Caco-2 (cell line): ENCODE measurements at regions of chr19 and their contacts with region 1.

Region 1: GRCh38 chr19:6424939-6425731 is 524 bp upstream of the KHSRP start:
- DNase-seq: peak; percentile 99 to 100
- H3K4me3 ChIP-seq: peak overlapping the region; percentile 23
- H3K4me3 Mint-ChIP-seq: peak overlapping the region; percentile 77
- H3K27ac Mint-ChIP-seq: peak overlapping the region; percentile 95
- H3K4me1 ChIP-seq: peaks cover 20% of the 10 kb centered on the region
- H3K4me1 Mint-ChIP-seq: peaks cover 6% of the 10 kb centered on the region
- H3K27me3 ChIP-seq: no peaks in the 10 kb centered on the region
- H3K27me3 Mint-ChIP-seq: no peaks in the 10 kb centered on the region
- CTCF ChIP-seq: no peak

Region 2: DNA sequence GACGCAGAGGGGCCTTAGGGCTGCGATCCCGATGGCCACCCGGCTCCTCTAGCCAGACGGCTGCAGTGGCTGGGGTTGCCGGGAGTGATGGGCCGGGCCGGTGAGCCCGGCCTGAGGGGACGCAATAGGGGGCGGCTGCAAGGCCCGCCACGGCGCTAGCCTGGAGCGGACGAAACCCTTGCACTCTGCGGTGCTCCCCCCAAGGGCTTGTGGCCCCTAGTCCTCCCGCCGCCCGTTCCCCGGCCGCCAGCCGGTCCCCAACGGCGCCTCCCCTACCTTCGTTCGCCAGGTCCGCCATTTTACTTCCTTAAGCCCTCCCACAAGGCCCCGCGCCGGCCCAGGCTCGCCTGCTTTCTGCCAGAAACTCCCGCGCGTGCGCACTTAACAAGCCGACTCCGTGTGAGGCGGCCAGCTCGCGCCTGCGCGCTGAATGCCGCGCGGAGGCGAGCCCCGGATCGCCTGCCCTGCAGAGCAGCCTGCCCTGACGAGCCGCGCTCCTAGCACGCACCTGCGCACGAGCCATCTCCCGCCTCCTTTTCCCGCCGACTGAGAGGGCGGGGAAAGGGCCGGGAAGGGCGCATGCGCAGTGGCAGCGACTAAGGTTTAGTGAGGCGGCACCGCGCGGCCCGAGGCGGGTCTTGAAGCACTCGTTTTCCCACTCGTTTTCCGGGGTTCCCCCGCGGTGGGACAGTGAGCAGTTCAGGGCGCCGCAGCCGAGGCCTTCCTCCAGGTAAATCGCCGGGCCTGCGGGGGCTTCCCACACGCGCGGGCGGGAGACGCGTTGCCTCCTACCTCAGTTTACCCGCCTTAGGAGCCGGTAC is 447.1 kb before region 1 on chr19 and contains the start of gene RANBP3:
- CTCF ChIA-PET with region 1: no interaction called
- POLR2A ChIA-PET with region 1: no interaction called
- intact Hi-C with region 1: loop called (anchors 5 kb)
- DNase-seq: peak; percentile 98
- H3K4me3 ChIP-seq: peak within 1 kb of the TSS; percentile 95
- H3K4me3 Mint-ChIP-seq: peak within 1 kb of the TSS; percentile 98
- H3K27ac Mint-ChIP-seq: peak within 1 kb of the TSS; percentile 91
- H3K4me1 ChIP-seq: peaks cover 23% of the 10 kb centered on the region
- H3K4me1 Mint-ChIP-seq: peaks cover 19% of the 10 kb centered on the region
- H3K27me3 ChIP-seq: no peaks in the 10 kb centered on the region
- H3K27me3 Mint-ChIP-seq: no peaks in the 10 kb centered on the region
- CTCF ChIP-seq: no peak
- total RNA-seq, gene RANBP3: 85.4 and 90.4 TPM in 2 replicates

Region 3: DNA sequence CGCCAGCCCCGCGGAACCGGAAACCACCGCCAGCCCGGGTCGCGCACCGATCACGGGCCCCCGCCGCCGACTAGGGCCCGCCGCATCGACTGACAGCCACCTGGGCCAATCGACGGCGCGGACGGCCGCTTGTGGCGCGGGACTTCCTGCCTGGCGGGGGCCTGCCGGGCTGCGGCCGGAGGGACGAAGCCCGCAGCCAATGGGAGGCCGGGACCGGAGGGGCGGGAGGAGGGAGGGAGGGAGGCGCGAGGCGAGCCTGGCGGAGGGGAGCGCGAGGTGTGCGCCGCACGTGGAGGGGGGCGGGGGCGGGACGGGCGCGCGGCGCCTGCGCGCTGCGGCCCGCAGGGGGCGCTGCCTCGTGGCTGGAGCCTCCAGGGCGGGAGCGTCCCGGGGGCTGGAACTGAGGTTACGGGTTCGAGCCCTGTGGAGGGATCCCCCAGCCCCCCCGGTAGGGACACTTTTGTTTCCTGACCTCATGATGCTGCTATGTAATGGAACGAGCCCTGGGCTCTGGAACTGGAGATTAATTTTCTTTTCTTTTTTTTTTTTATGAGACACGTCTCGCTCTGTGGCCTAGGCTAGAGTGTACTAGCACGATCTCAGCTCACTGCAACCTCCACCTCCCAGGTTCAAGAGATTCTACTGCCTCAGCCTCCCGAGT is 145.1 kb before region 1 on chr19 and contains the start of gene MLLT1:
- CTCF ChIA-PET with region 1: interaction called, 3 read pairs
- POLR2A ChIA-PET with region 1: no interaction called
- intact Hi-C with region 1: loop called (anchors 10 kb)
- DNase-seq: peak; percentile 97 to 98
- H3K4me3 ChIP-seq: peak within 1 kb of the TSS; percentile 61
- H3K4me3 Mint-ChIP-seq: peak within 1 kb of the TSS; percentile 92
- H3K27ac Mint-ChIP-seq: peak within 1 kb of the TSS; percentile 89
- H3K4me1 ChIP-seq: peaks cover 10% of the 10 kb centered on the region; the same call in 1 of the 2 replicates
- H3K4me1 Mint-ChIP-seq: peaks cover 14% of the 10 kb centered on the region
- H3K27me3 ChIP-seq: no peaks in the 10 kb centered on the region
- H3K27me3 Mint-ChIP-seq: no peaks in the 10 kb centered on the region
- CTCF ChIP-seq: peak; percentile 56 to 80
- total RNA-seq, gene MLLT1: 60.0 and 63.2 TPM in 2 replicates

Region 4: DNA sequence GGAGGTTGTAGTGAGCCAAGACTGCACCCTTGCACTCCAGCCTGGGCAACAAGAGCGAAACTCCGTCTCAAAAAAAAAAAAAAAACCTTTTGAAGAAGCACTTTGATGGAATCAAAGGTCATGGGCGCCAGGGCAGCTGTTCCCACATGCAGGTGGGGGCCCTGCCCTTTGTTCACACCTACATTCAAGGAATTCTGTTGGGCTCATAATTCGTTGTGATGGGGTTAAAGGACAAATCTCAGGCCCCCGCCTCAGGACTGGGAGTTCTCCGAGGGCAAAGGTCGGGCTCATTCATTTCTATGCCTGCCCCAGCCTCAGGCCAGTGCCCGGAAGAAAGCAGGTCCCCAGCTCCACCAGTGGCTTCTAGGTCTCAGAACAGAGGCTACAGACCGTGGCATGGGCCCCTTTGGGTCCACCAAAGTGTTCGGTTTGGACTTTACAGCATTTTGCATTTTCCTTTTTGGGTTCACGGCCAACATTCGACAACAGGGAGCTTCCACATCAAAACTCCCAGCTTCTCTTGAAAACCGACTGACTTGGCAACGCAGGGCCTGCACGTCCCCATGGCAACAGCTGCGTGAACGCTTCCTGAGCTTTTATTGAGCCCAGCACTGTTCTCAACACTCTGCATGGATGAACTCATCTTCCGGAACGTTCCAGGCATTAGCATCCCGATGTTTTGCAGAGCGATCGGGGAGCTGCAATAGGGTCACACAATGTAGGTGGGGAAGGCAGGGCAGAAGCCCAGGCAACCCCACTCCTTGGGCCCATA is 22.1 kb before region 1 on chr19:
- CTCF ChIA-PET with region 1: interaction called, 4 read pairs
- POLR2A ChIA-PET with region 1: interaction called, 25 read pairs
- intact Hi-C with region 1: no loop called
- DNase-seq: peak; percentile 93 to 96
- H3K4me3 ChIP-seq: peak overlapping the region; percentile 30
- H3K4me3 Mint-ChIP-seq: peak overlapping the region; percentile 70
- H3K27ac Mint-ChIP-seq: peak overlapping the region; percentile 98
- H3K4me1 ChIP-seq: peaks cover 27% of the 10 kb centered on the region
- H3K4me1 Mint-ChIP-seq: peaks cover 6% of the 10 kb centered on the region
- H3K27me3 ChIP-seq: no peaks in the 10 kb centered on the region
- H3K27me3 Mint-ChIP-seq: no peaks in the 10 kb centered on the region
- CTCF ChIP-seq: no peak

Region 5: DNA sequence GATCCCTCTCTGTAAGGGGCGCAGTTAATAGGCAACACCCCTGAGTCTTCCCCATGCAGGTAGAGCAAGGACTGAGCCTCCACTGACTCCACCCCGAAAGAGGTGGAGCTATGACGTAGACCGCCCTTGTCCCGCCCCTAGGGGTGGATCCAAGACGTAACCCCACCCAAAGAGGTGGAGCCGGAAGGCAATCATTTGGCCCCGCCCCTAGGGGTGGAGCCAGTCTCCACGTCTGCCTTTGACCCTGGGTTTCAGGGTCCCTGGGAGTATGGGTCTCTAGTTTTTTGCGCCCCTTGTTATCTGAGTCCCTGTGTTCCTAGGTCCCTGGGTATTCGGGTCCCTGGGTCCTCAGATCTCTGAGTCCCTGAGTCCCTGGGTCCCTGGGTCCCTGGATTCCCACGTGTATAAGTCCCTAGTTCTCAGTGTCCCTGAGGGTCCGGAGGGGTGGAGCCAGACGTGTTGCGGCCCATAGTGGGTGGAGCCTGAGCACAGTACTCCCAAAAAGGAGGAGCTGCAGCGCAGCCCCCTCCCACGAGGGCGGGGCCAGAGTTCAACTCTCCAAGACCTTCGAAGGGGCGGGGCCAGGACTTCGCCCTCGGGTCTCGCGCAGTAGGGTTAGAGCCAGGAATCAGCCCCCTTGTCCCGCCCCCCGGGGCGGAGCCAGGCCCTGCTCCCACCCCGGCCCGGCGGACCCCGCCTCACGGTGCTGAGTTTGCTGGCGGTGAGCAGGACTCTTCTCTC is 51.2 kb after region 1 on chr19:
- CTCF ChIA-PET with region 1: interaction called, 4 read pairs
- POLR2A ChIA-PET with region 1: interaction called, 12 read pairs
- intact Hi-C with region 1: no loop called
- DNase-seq: peak; percentile 98 to 99
- H3K4me3 ChIP-seq: peak overlapping the region; percentile 47
- H3K4me3 Mint-ChIP-seq: peak overlapping the region; percentile 84
- H3K27ac Mint-ChIP-seq: peak overlapping the region; percentile 91
- H3K4me1 ChIP-seq: peaks cover 19% of the 10 kb centered on the region
- H3K4me1 Mint-ChIP-seq: peaks cover 9% of the 10 kb centered on the region
- H3K27me3 ChIP-seq: no peaks in the 10 kb centered on the region
- H3K27me3 Mint-ChIP-seq: no peaks in the 10 kb centered on the region
- CTCF ChIP-seq: no peak